IMR-90 (cell line): ENCODE measurements at regions of chr6 and their contacts with region 1.

Region 1: DNA sequence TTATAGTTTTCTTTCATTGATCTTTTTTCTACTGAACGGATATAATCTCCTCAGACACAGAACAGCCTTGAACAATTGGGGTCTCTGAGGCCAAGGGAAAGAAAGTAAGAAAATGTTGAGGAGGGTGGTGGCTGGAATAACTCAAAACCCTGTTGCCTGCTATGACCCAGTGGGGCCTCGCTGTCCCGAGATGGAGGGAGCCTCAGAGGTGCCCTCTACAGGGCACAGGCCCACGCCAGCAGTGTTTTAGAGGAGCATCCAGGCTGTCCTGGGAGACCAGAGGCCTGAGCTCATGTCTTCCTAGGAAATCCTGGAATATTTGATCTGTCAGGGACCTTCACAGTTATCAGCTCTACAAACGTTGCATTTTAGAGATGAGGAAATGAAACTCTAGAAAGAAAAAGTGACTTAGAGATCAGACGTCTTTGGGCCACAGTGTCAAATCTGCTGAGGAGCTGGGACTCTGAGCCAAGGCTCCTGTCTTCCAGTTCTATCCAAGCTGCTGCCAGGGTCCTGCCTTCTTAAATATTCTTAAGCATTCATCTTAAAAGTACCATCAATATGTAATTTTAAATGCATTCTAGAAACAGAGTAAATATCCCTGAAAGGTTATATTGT is 26.3 kb downstream of the ALDH5A1 start:
- DNase-seq: peak; percentile 19
- ATAC-seq: peak; percentile 98
- H3K4me3 ChIP-seq: no peak overlapping the region
- H3K27ac ChIP-seq: no peak overlapping the region
- H3K4me1 ChIP-seq: no peaks in the 10 kb centered on the region
- H3K27me3 ChIP-seq: peaks cover 2% of the 10 kb centered on the region; the same call in 1 of the 2 replicates
- CTCF ChIP-seq: peak; percentile 52
- POLR2A ChIP-seq: no peak
- RAD21 ChIP-seq: peak; percentile 39

Region 2: GRCh38 chr6:24431045-24431451 is 90.0 kb before region 1 on chr6:
- CTCF ChIA-PET with region 1: interaction called, 6 read pairs
- POLR2A ChIA-PET with region 1: no interaction called
- dilution Hi-C with region 1: no loop called
- in situ Hi-C with region 1: no loop called
- intact Hi-C with region 1: loop called (anchors 1 kb)
- DNase-seq: peak; percentile 54
- ATAC-seq: peak; percentile 67
- H3K4me3 ChIP-seq: no peak overlapping the region
- H3K27ac ChIP-seq: no peak overlapping the region
- H3K4me1 ChIP-seq: peaks cover 3% of the 10 kb centered on the region; the same call in 1 of the 2 replicates
- H3K27me3 ChIP-seq: no peaks in the 10 kb centered on the region
- CTCF ChIP-seq: peak; percentile 63
- POLR2A ChIP-seq: no peak
- RAD21 ChIP-seq: peak; percentile 54

Region 3: DNA sequence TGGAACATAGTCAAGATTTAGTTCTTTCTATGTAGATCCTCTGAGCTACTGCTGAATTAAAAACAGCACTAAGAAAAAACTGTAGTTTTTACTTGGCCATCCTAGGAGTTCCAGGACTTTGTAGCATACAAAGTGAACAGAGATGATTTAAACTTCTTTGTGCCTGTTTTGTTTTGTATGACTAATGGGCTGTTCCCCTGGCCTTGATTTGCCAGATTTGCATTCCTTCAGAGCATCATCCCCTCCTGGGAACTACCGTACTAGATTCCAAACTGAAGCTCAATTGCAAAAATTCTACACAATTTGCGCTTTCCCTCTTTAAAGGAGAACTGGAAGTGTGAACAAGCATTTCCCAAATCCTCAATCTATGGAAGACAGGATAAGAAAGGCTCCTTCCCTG is 168.9 kb after region 1 on chr6:
- CTCF ChIA-PET with region 1: no interaction called
- POLR2A ChIA-PET with region 1: no interaction called
- dilution Hi-C with region 1: no loop called
- in situ Hi-C with region 1: no loop called
- intact Hi-C with region 1: loop called (anchors 2 kb)
- DNase-seq: no peak
- ATAC-seq: peak; percentile 46; the same call in 1 of the 2 replicates
- H3K4me3 ChIP-seq: no peak overlapping the region
- H3K27ac ChIP-seq: no peak overlapping the region
- H3K4me1 ChIP-seq: no peaks in the 10 kb centered on the region
- H3K27me3 ChIP-seq: no peaks in the 10 kb centered on the region
- CTCF ChIP-seq: no peak
- POLR2A ChIP-seq: no peak
- RAD21 ChIP-seq: no peak

Region 4: GRCh38 chr6:26017632-26017966 is 1496.6 kb after region 1 on chr6:
- CTCF ChIA-PET with region 1: interaction called, 11 read pairs
- POLR2A ChIA-PET with region 1: no interaction called
- dilution Hi-C with region 1: no loop called
- in situ Hi-C with region 1: no loop called
- intact Hi-C with region 1: no loop called
- DNase-seq: peak; percentile 95
- ATAC-seq: peak; percentile 34
- H3K4me3 ChIP-seq: peak overlapping the region; percentile 44
- H3K27ac ChIP-seq: peak overlapping the region; percentile 78
- H3K4me1 ChIP-seq: peaks cover 12% of the 10 kb centered on the region
- H3K27me3 ChIP-seq: no peaks in the 10 kb centered on the region
- CTCF ChIP-seq: peak; percentile 72
- POLR2A ChIP-seq: peak; percentile 97
- RAD21 ChIP-seq: no peak